HepG2 (cell line): ENCODE measurements at regions of chr19 and their contacts with region 1.

Region 1: GRCh38 chr19:2543463-2544442 is 67.8 kb downstream of the GADD45B start:
- DNase-seq: peak; percentile 94
- ATAC-seq: peak; percentile 74
- H3K4me3 ChIP-seq: peak overlapping the region in 2 of 3 experiments; percentile 28 to 65; a peak in 4 of 6 replicates
- H3K27ac ChIP-seq: peak overlapping the region; percentile 98
- H3K4me1 ChIP-seq: peaks cover 81% of the 10 kb centered on the region
- H3K27me3 ChIP-seq: no peaks in the 10 kb centered on the region
- CTCF ChIP-seq: peak; percentile 73
- EP300 ChIP-seq: peak in 1 of 2 experiments; percentile 78; a peak in 3 of 4 replicates
- POLR2A ChIP-seq: peak; percentile 45 to 77
- RAD21 ChIP-seq: peak; percentile 88

Region 2: GRCh38 chr19:2507109-2507508 is 36.6 kb before region 1 on chr19:
- CTCF ChIA-PET with region 1: no interaction called
- POLR2A ChIA-PET with region 1: interaction called, 13 read pairs
- in situ Hi-C with region 1: no loop called
- intact Hi-C with region 1: no loop called
- DNase-seq: peak; percentile 92
- ATAC-seq: peak; percentile 90
- H3K4me3 ChIP-seq: peak overlapping the region in 1 of 3 experiments; percentile 28; a peak in 2 of 6 replicates
- H3K27ac ChIP-seq: peak overlapping the region; percentile 33
- H3K4me1 ChIP-seq: peaks cover 53% of the 10 kb centered on the region
- H3K27me3 ChIP-seq: peaks cover 0 to 25% of the 10 kb centered on the region in 2 experiments; a peak in 4 of 5 replicates
- CTCF ChIP-seq: no peak
- EP300 ChIP-seq: peak in 1 of 2 experiments; percentile 63; a peak in 2 of 4 replicates
- POLR2A ChIP-seq: no peak
- RAD21 ChIP-seq: no peak

Region 3: DNA sequence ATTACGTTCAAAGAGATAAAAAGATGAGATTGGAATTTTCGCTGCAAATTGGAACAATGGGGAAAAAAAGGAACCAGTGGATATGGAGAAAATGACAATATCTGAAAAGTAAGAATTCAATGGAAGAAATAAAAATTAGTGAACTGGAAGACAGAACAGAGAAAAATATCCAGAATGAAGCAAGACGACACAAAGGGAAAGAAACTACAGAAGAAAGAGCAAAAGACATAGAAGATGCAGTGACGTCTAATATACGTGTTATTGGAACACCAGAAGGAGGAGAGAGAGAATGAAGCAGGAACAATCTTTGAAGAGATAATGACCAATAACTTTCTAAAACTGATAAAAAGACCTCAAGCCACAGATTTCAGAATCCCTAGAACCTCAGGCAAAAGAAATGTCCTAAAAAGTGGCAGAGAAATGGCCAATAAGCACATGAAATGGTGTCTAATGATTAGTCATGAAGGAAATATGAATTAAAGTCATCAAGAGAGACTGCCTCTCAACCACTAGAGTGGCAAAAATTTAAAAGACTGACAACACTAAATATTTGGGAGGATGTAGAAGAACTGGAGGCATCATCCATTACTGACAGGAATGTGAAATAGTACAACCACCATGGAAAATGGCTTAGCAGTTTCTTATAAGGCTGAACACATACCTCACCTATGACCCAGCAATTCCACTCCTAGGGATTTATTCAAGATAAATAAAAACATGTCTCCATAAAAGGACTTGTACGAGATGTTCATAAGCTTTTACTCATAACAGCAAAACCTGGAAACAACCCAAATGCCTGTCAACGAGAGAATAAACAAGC is 11.3 kb before region 1 on chr19:
- CTCF ChIA-PET with region 1: no interaction called
- POLR2A ChIA-PET with region 1: interaction called, 62 read pairs
- in situ Hi-C with region 1: no loop called
- intact Hi-C with region 1: no loop called
- DNase-seq: no peak
- ATAC-seq: no peak
- H3K4me3 ChIP-seq: no peak overlapping the region
- H3K27ac ChIP-seq: no peak overlapping the region
- H3K4me1 ChIP-seq: peaks cover 67% of the 10 kb centered on the region
- H3K27me3 ChIP-seq: no peaks in the 10 kb centered on the region
- CTCF ChIP-seq: no peak
- EP300 ChIP-seq: no peak
- POLR2A ChIP-seq: no peak
- RAD21 ChIP-seq: no peak

Region 4: DNA sequence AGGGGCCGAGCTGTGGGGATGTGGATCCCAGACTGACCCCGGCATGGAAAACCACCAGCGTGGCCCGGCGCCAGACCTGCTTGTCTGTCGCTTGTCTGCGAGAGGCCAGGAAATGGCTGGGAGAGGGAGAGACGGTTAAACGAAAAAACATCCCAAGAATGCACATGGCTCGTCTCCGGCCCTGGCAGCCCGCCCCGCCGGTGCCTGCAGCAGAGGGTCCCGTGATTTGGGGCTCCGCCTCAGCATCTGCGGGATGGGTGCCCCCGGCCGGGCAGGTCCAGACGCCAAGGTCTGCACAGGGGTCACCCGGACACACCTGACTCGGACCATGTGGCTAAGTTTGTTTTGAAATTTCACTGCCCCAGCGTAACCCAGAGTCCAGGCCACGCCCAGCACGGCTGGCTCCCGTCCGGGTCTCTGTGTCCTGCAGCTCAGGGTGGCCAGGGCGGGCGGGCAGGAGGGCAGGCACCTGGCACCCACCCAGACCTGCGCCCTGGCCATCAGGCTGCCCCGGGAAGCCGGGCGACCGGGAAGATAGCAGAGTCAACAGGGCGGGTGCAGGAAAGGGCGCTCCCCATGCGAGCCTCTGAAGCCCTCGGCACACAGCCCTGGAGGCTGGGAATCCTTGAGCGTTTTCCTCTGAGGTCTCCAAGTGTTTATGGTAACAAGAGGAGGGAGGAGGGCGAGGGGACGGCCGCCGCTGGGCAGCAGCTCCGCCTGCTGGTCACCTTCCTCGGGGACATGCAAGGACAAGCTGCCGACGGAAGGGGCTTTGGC is 35.3 kb after region 1 on chr19:
- CTCF ChIA-PET with region 1: interaction called, 3 read pairs
- POLR2A ChIA-PET with region 1: interaction called, 63 read pairs
- in situ Hi-C with region 1: no loop called
- intact Hi-C with region 1: loop called (anchors 1 kb)
- DNase-seq: peak; percentile 90
- ATAC-seq: peak; percentile 80
- H3K4me3 ChIP-seq: peak overlapping the region; percentile 54 to 71 (median 61)
- H3K27ac ChIP-seq: peak overlapping the region; percentile 91
- H3K4me1 ChIP-seq: peaks cover 54% of the 10 kb centered on the region
- H3K27me3 ChIP-seq: no peaks in the 10 kb centered on the region
- CTCF ChIP-seq: peak; percentile 97
- EP300 ChIP-seq: peak in 1 of 2 experiments; percentile 44; a peak in 2 of 4 replicates
- POLR2A ChIP-seq: peak in 1 of 2 experiments; percentile 59; a peak in 2 of 4 replicates
- RAD21 ChIP-seq: peak; percentile 95